Activated naive CD4-positive, alpha-beta T cell treated with anti-CD3 and anti-CD28 coated beads for 36 hours (primary cell): ENCODE measurements at regions of chr11 and their contacts with region 1.

Region 1: GRCh38 chr11:123110356-123110755 is 48.4 kb upstream of the HSPA8 start:
- DNase-seq: no peak
- H3K4me3 Mint-ChIP-seq: peak overlapping the region; percentile 23
- H3K27ac Mint-ChIP-seq: no peak overlapping the region
- H3K4me1 Mint-ChIP-seq: peaks cover 4% of the 10 kb centered on the region
- H3K27me3 Mint-ChIP-seq: no peaks in the 10 kb centered on the region

Region 2: DNA sequence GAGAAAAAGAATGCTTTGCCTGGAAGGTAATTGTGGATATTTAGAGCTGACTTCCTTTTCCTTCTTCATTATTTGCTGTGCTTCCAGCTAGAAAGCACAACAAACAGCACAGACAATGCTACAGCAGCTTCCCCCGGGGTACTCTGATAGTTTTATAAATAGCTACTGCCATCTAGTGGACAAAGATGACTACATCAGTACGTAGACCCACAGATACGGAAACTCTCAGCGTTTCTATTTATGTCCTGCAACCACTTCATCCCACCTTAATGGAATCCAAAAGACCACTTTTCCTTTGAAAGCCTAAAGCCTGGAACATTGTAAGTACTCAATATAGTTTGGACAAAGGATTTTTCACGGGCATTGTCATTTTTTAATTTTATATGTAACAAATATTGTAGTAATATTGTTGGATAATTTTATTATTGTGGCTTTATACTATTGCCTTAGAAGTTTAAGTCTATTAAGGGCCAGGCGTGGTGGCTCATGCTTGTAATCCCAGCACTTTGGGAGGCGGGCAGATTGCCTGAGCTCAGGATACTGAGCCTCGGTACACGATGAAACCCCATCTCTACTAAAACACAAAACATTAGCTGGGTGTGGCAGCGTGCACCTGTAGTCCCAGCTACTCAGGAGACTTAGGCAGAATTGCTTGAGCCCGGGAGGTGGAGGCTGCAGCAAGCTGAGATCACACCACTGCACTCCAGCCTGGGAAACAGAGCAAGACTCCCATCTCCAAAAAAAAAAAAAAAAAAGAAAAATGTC is 55.9 kb before region 1 on chr11:
- CTCF ChIA-PET with region 1: interaction called, 14 read pairs
- intact Hi-C with region 1: no loop called
- DNase-seq: peak; percentile 17
- H3K4me3 Mint-ChIP-seq: no peak overlapping the region
- H3K27ac Mint-ChIP-seq: peak overlapping the region; percentile 70
- H3K4me1 Mint-ChIP-seq: peaks cover 37% of the 10 kb centered on the region
- H3K27me3 Mint-ChIP-seq: no peaks in the 10 kb centered on the region

Region 3: DNA sequence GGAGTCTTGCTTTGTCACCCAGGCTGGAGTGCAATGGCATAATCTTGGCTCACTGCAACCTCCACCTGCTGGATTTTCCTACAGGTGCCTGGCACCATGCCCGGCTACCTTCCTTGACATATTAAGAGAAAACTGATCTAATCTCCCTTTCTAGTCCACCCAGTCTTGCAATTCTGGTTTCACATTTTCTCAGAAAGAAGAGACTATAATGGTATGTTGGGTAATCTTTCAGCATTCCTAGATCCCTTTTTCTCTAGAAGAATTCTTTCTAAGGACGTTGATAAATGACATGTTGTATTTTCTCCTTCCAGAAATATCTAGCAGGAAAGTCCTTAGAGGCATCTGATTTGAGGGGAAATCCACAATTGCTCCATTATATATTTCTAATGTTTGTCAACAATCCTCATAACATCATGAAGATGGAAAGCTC is 38.0 kb before region 1 on chr11:
- CTCF ChIA-PET with region 1: no interaction called
- intact Hi-C with region 1: no loop called
- DNase-seq: no peak
- H3K4me3 Mint-ChIP-seq: no peak overlapping the region
- H3K27ac Mint-ChIP-seq: no peak overlapping the region
- H3K4me1 Mint-ChIP-seq: peaks cover 55% of the 10 kb centered on the region
- H3K27me3 Mint-ChIP-seq: no peaks in the 10 kb centered on the region

Region 4: GRCh38 chr11:123235117-123235655 is 124.8 kb after region 1 on chr11:
- CTCF ChIA-PET with region 1: interaction called, 10 read pairs
- intact Hi-C with region 1: no loop called
- DNase-seq: peak; percentile 38
- H3K4me3 Mint-ChIP-seq: no peak overlapping the region
- H3K27ac Mint-ChIP-seq: no peak overlapping the region
- H3K4me1 Mint-ChIP-seq: peaks cover 14% of the 10 kb centered on the region
- H3K27me3 Mint-ChIP-seq: no peaks in the 10 kb centered on the region

Region 5: GRCh38 chr11:123261345-123262106 is 151.2 kb after region 1 on chr11:
- CTCF ChIA-PET with region 1: interaction called, 41 read pairs
- intact Hi-C with region 1: no loop called
- DNase-seq: peak; percentile 83
- H3K4me3 Mint-ChIP-seq: no peak overlapping the region
- H3K27ac Mint-ChIP-seq: no peak overlapping the region
- H3K4me1 Mint-ChIP-seq: peaks cover 7% of the 10 kb centered on the region
- H3K27me3 Mint-ChIP-seq: peaks cover 23% of the 10 kb centered on the region

Region 6: GRCh38 chr11:123357961-123358841 is 247.8 kb after region 1 on chr11:
- CTCF ChIA-PET with region 1: no interaction called
- intact Hi-C with region 1: loop called (anchors 1 kb)
- DNase-seq: peak; percentile 71
- H3K4me3 Mint-ChIP-seq: peak overlapping the region; percentile 87
- H3K27ac Mint-ChIP-seq: peak overlapping the region; percentile 77
- H3K4me1 Mint-ChIP-seq: peaks cover 42% of the 10 kb centered on the region
- H3K27me3 Mint-ChIP-seq: peaks cover 40% of the 10 kb centered on the region

Region 7: GRCh38 chr11:123478352-123478987 is 368.1 kb after region 1 on chr11:
- CTCF ChIA-PET with region 1: interaction called, 5 read pairs
- intact Hi-C with region 1: loop called (anchors 1 kb)
- DNase-seq: peak; percentile 43
- H3K4me3 Mint-ChIP-seq: no peak overlapping the region
- H3K27ac Mint-ChIP-seq: no peak overlapping the region
- H3K4me1 Mint-ChIP-seq: peaks cover 26% of the 10 kb centered on the region
- H3K27me3 Mint-ChIP-seq: no peaks in the 10 kb centered on the region

Region 8: DNA sequence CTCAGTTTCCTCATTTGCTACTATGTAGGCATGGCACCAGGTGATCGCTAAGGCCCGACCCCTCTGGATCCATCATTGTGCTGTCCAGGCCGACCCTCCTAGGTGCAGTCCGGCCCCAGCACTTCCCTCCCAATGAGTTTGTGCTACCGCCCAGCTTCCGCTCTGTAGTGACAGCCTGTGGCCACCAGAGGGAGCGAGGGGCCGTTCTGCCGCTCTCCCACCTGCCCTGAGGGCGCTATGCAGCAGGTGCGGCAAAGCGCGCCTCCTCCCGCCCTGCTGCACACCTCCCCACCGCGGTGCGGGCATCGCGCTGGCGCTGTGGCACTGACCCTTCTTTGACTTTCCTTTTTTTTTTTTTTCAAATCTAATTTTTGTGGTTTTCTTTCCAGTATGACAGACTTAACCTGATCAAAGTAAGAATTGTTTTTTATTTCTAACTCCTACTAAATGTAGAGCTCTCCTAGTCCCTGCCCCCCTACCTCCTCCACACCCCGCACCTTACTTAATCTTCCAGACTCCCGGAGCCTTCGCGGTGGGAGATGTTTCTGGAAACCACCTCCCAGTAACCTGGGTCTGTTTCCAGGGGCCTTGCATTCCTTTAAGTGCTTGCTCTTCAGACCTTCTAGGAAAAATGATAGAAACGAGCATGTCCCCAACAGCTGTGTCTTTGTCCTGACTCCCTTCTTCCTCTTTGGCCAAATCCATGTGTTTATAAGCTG is 470.4 kb after region 1 on chr11:
- CTCF ChIA-PET with region 1: no interaction called
- intact Hi-C with region 1: loop called (anchors 2 kb)
- DNase-seq: peak; percentile 78
- H3K4me3 Mint-ChIP-seq: no peak overlapping the region
- H3K27ac Mint-ChIP-seq: no peak overlapping the region
- H3K4me1 Mint-ChIP-seq: peaks cover 9% of the 10 kb centered on the region
- H3K27me3 Mint-ChIP-seq: peaks cover 2% of the 10 kb centered on the region

Region 9: DNA sequence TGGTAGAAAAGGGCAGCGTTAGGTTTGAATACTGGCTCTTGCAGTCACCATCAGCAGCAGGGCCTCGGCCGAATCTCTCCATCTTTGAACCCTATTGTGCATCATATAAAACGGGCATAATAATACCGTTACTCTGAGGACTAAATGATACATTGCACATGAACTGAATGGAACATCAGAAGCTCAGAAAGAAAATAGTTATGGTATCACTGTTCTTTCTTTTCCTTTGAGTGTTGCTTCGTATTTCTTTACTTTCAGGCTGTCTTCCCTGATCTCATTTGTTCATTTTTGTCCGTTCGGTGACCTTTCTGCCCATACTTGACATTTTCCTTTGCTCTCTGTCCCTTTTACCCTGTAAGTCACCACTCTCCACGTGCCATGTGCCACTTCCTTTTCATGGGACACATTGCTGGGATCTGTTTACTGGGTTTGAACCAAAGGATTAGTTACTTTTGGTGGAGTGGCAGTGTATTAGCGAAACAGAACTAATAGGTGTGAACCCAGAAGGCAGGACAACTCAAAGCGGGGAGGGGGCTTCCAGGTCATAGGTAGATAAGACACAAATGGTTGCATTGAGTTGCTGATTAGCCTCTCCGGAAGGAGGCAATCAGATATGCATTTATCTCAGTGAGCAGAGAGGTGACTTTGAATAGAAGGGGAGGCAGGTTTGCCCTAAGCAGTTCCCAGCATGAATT is 631.8 kb after region 1 on chr11:
- CTCF ChIA-PET with region 1: no interaction called
- intact Hi-C with region 1: no loop called
- DNase-seq: peak; percentile 15
- H3K4me3 Mint-ChIP-seq: peak overlapping the region; percentile 98
- H3K27ac Mint-ChIP-seq: peak overlapping the region; percentile 92
- H3K4me1 Mint-ChIP-seq: peaks cover 37% of the 10 kb centered on the region
- H3K27me3 Mint-ChIP-seq: no peaks in the 10 kb centered on the region